Activated CD4-positive, alpha-beta T cell treated with anti-CD3 and anti-CD28 coated beads, Interleukin-2, amount 10 ng/mL, durations not matched to agents 7 days and 5 days (primary cell): ENCODE measurements at regions of chr12 and their contacts with region 1.

Region 1: GRCh38 chr12:68627419-68628319 is 17.0 kb downstream of the RAP1B start:
- DNase-seq: no peak
- H3K4me3 Mint-ChIP-seq: no peak overlapping the region
- H3K27ac Mint-ChIP-seq: peak overlapping the region; percentile 52
- H3K4me1 Mint-ChIP-seq: peaks cover 57% of the 10 kb centered on the region
- H3K27me3 Mint-ChIP-seq: no peaks in the 10 kb centered on the region

Region 2: DNA sequence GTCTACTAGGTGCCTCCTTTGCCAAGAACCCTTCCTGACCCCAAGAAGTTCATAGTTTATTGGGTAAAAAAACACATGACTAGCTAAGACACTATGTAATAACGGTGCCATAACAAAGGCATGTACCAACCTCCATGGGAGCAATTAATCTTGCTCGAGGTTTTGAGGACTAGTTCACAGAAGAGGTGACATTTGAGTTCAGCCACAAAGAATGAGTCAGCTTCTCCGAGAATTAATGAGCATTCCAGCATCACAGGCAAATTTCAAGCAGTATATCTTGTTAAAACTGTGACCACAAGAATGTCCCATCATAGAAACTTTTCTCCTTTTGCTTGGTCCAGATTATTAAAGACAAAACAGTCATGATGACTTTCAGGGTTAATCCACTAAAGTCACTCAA is 130.0 kb before region 1 on chr12:
- CTCF ChIA-PET with region 1: no interaction called
- POLR2A ChIA-PET with region 1: interaction called, 10 read pairs
- DNase-seq: no peak
- H3K4me3 Mint-ChIP-seq: no peak overlapping the region
- H3K27ac Mint-ChIP-seq: peak overlapping the region; percentile 42
- H3K4me1 Mint-ChIP-seq: peaks cover 23% of the 10 kb centered on the region
- H3K27me3 Mint-ChIP-seq: no peaks in the 10 kb centered on the region

Region 3: DNA sequence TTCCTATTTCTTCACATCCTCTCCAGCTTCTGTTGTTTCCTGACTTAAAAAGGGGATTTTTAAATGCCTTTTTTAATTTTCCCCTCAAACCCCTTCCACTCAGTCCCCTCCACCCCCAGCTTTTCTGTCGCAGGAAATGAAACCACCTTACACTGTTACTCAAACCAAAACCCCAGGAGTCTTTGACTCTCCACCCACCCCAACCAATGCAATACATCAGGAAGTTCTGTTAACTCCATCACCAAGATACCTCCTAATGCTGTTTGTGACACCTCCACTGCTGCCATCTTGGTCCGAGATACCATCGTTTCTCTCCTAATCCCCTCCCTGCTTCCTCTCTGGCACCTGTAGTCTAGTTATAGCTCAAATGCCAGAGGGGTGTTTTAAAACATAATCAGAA is 330.7 kb after region 1 on chr12:
- CTCF ChIA-PET with region 1: no interaction called
- POLR2A ChIA-PET with region 1: no interaction called
- DNase-seq: peak; percentile 13
- H3K4me3 Mint-ChIP-seq: no peak overlapping the region
- H3K27ac Mint-ChIP-seq: peak overlapping the region; percentile 27
- H3K4me1 Mint-ChIP-seq: peaks cover 21% of the 10 kb centered on the region
- H3K27me3 Mint-ChIP-seq: no peaks in the 10 kb centered on the region